ENCODE measurements at regions of chr13 and their contacts with region 1.

Region 1: GRCh38 chr13:73702419-73703071 is 431.7 kb downstream of the KLF12 start:
- DNase-seq: no peak
- H3K4me3 Mint-ChIP-seq: no peak overlapping the region
- H3K27ac Mint-ChIP-seq: peak overlapping the region; percentile 84
- H3K4me1 Mint-ChIP-seq: peaks cover 12% of the 10 kb centered on the region
- H3K27me3 Mint-ChIP-seq: no peaks in the 10 kb centered on the region
- CTCF ChIP-seq: no peak

Region 2: DNA sequence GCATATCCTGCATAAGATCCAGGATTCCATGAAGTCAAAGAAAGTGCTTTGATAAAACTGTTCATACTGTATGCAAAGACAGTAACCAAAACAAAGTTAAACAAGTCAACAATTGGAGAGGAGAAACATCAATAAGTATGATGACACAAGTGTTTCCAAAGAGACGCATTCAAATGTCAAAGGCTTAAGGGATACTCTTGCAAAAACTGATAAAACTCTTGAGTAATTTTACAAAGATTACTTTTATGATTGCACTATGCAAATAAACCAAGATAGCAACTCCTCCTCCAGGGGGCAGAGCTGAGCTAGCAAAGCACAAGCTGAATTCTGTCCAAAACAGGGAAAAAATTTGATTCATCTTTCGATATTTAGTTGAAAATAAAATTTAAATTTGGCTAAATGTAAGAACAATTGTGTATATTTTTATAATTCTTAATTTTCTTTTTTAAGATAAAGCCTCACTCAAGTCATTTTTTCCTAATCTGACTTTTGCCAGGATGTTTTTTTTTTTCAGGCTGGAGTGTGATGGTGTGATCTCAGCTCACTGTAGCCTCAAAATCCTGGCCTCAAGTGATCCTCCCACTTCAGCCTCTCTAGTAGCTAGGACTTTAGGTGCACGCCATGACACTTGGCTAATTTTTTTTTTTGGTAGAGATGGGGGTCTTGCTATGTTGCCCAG is 1059.1 kb before region 1 on chr13:
- CTCF ChIA-PET with region 1: no interaction called
- intact Hi-C with region 1: loop called (anchors 5 kb)
- DNase-seq: peak; percentile 35
- H3K4me3 Mint-ChIP-seq: no peak overlapping the region
- H3K27ac Mint-ChIP-seq: no peak overlapping the region
- H3K4me1 Mint-ChIP-seq: no peaks in the 10 kb centered on the region
- H3K27me3 Mint-ChIP-seq: no peaks in the 10 kb centered on the region
- CTCF ChIP-seq: no peak

Region 3: DNA sequence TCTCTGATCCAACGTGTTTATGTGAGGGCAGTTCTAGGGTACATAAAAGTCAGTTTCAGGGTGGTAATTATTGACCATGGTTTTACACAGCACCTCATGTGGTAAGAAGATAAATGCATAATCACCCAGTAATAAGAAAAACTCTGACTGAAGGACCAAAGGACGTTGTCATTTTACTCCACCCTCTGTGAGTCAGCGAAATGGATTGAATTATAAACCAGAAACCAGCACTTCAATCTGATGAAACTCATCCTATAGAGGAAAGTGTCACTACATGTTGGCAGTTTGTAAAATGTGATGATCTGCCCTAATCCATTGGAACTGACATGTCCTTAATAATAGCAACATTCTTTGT is 237.0 kb before region 1 on chr13:
- CTCF ChIA-PET with region 1: no interaction called
- intact Hi-C with region 1: loop called (anchors 1 kb)
- DNase-seq: peak; percentile 13
- H3K4me3 Mint-ChIP-seq: no peak overlapping the region
- H3K27ac Mint-ChIP-seq: peak overlapping the region; percentile 86
- H3K4me1 Mint-ChIP-seq: no peaks in the 10 kb centered on the region
- H3K27me3 Mint-ChIP-seq: no peaks in the 10 kb centered on the region
- CTCF ChIP-seq: no peak

Region 4: GRCh38 chr13:73505376-73505890 is 197.1 kb before region 1 on chr13:
- CTCF ChIA-PET with region 1: no interaction called
- intact Hi-C with region 1: no loop called
- DNase-seq: no peak
- H3K4me3 Mint-ChIP-seq: no peak overlapping the region
- H3K27ac Mint-ChIP-seq: no peak overlapping the region
- H3K4me1 Mint-ChIP-seq: no peaks in the 10 kb centered on the region
- H3K27me3 Mint-ChIP-seq: no peaks in the 10 kb centered on the region
- CTCF ChIP-seq: no peak

Region 5: DNA sequence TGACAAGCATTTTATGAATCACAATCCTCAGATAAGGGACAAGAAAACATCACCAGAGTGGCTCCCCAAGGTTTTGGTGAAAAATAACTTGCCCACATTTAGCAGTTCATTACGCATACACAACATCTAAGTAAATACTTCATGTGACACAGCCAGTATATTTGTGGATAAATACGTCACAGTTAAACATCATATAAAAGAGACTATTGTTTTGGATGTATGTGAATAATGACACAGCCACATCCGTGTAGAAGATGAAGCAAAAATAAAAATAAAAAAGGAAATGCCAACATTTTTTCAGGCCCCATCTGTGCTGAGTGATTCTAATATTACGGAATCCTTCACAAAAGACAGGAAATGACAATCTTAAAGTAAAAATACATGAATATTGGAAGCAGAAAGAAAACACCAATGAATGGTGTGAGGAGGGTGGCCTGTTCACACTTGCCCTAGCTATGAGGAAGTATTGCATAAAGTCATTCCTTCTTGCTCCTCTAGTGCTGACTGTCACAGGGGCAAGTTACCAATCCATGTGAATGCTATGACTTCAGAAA is 25.4 kb before region 1 on chr13:
- CTCF ChIA-PET with region 1: no interaction called
- intact Hi-C with region 1: loop called (anchors 2 kb)
- DNase-seq: peak; percentile 4
- H3K4me3 Mint-ChIP-seq: no peak overlapping the region
- H3K27ac Mint-ChIP-seq: peak overlapping the region; percentile 95
- H3K4me1 Mint-ChIP-seq: peaks cover 12% of the 10 kb centered on the region
- H3K27me3 Mint-ChIP-seq: no peaks in the 10 kb centered on the region
- CTCF ChIP-seq: no peak

Measured in Calu3 (cell line).